CD14-positive monocyte (primary cell): ENCODE measurements at regions of chr19 and their contacts with region 1.

Region 1: GRCh38 chr19:7680606-7681339 is at the start of gene TRAPPC5:
- DNase-seq: peak; percentile 85 to 89 (median 89)
- H3K4me3 ChIP-seq: peak within 1 kb of the TSS; percentile 95 to 99 (median 96)
- H3K4me3 Mint-ChIP-seq: peak within 1 kb of the TSS; percentile 89 to 92
- H3K27ac ChIP-seq: peak within 1 kb of the TSS; percentile 96
- H3K27ac Mint-ChIP-seq: peak within 1 kb of the TSS; percentile 95 to 99 (median 98)
- H3K4me1 ChIP-seq: peaks cover 58 to 70% of the 10 kb centered on the region in 2 donors
- H3K4me1 Mint-ChIP-seq: peaks cover 61% of the 10 kb centered on the region
- H3K27me3 ChIP-seq: no peaks in the 10 kb centered on the region
- H3K27me3 Mint-ChIP-seq: peaks cover 0 to 2% (median 0%) of the 10 kb centered on the region in 3 donors
- CTCF ChIP-seq: peak; percentile 95
- polyA plus RNA-seq, gene TRAPPC5: 126 to 449 (median 414) TPM

Region 2: DNA sequence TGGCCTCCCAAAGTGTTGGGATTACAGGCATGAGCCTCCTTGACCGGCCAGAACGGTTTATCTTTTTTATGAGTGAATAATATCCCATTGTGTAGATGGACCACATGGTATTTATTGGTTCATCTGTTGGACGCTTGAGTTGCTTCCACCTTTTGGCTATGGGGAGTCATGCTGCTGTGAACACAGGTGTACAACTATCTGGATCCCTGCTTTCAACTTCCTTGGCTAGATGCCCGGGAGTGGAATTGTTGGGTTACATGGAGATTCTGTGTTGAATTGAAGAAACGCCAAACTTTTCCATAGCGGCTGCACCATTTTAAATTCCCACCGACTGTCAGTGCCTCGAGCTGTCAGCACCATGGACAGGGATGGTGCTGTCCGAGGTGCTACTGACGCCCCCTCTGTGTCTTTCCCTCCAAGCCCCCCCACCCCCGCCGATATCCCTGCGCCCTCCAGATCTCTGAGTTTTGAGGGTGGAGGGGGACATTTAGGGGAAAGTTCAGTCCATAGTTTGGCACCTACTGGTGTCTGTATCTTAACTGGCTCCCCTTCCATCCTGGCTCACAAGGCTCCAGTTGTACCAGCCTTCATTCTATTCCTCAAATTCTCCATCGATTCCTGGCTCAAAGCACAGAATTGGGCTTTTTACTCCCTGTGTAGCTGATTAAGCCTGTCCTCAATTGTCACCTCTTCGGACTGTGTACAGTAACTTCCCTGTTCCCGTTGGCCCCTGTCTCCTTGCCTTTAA is 118.0 kb before region 1 on chr19:
- intact Hi-C with region 1: loop called (anchors 2 kb)
- DNase-seq: no peak
- H3K4me3 ChIP-seq: no peak overlapping the region
- H3K4me3 Mint-ChIP-seq: no peak overlapping the region
- H3K27ac ChIP-seq: no peak overlapping the region
- H3K27ac Mint-ChIP-seq: no peak overlapping the region
- H3K4me1 ChIP-seq: peaks cover 0 to 5% of the 10 kb centered on the region in 2 donors
- H3K4me1 Mint-ChIP-seq: peaks cover 10% of the 10 kb centered on the region
- H3K27me3 ChIP-seq: no peaks in the 10 kb centered on the region
- H3K27me3 Mint-ChIP-seq: peaks cover 0 to 5% (median 2%) of the 10 kb centered on the region in 3 donors
- CTCF ChIP-seq: no peak

Region 3: GRCh38 chr19:7636691-7637373 is 43.9 kb before region 1 on chr19 and contains the start of gene STXBP2:
- intact Hi-C with region 1: loop called (anchors 5 kb)
- DNase-seq: peak; percentile 73 to 81 (median 74)
- H3K4me3 ChIP-seq: peak within 1 kb of the TSS; percentile 56 to 99 (median 90)
- H3K4me3 Mint-ChIP-seq: peak within 1 kb of the TSS; percentile 89 to 92
- H3K27ac ChIP-seq: peak within 1 kb of the TSS; percentile 96 to 100
- H3K27ac Mint-ChIP-seq: peak within 1 kb of the TSS; percentile 94 to 98 (median 95)
- H3K4me1 ChIP-seq: peaks cover 33 to 42% of the 10 kb centered on the region in 2 donors
- H3K4me1 Mint-ChIP-seq: peaks cover 46% of the 10 kb centered on the region
- H3K27me3 ChIP-seq: no peaks in the 10 kb centered on the region
- H3K27me3 Mint-ChIP-seq: peaks cover 0 to 3% (median 2%) of the 10 kb centered on the region in 3 donors
- CTCF ChIP-seq: no peak
- polyA plus RNA-seq, gene STXBP2: 249 to 846 (median 327) TPM

Region 4: GRCh38 chr19:7645163-7645562 is 35.6 kb before region 1 on chr19:
- intact Hi-C with region 1: loop called in 1 of 2 experiments (anchors 5 kb)
- DNase-seq: peak; percentile 63 to 77 (median 69)
- H3K4me3 ChIP-seq: peak overlapping the region in 2 of 3 experiments; percentile 51 to 75
- H3K4me3 Mint-ChIP-seq: peak overlapping the region; percentile 71 to 94
- H3K27ac ChIP-seq: peak overlapping the region; percentile 73 to 87
- H3K27ac Mint-ChIP-seq: peak overlapping the region; percentile 88 to 98 (median 93)
- H3K4me1 ChIP-seq: peaks cover 46 to 60% of the 10 kb centered on the region in 2 donors
- H3K4me1 Mint-ChIP-seq: peaks cover 41% of the 10 kb centered on the region
- H3K27me3 ChIP-seq: no peaks in the 10 kb centered on the region
- H3K27me3 Mint-ChIP-seq: no peaks in the 10 kb centered on the region
- CTCF ChIP-seq: no peak

Region 5: GRCh38 chr19:7658219-7658686 is 22.5 kb before region 1 on chr19:
- intact Hi-C with region 1: loop called (anchors 1 to 2 kb)
- DNase-seq: peak; percentile 72 to 87 (median 82)
- H3K4me3 ChIP-seq: peak overlapping the region in 2 of 3 experiments; percentile 16 to 61
- H3K4me3 Mint-ChIP-seq: peak overlapping the region; percentile 67 to 73
- H3K27ac ChIP-seq: peak overlapping the region; percentile 99 to 100
- H3K27ac Mint-ChIP-seq: peak overlapping the region; percentile 98 to 100 (median 99)
- H3K4me1 ChIP-seq: peaks cover 69 to 74% of the 10 kb centered on the region in 2 donors
- H3K4me1 Mint-ChIP-seq: peaks cover 58% of the 10 kb centered on the region
- H3K27me3 ChIP-seq: no peaks in the 10 kb centered on the region
- H3K27me3 Mint-ChIP-seq: peaks cover 0 to 18% (median 0%) of the 10 kb centered on the region in 3 donors
- CTCF ChIP-seq: no peak

Region 6: DNA sequence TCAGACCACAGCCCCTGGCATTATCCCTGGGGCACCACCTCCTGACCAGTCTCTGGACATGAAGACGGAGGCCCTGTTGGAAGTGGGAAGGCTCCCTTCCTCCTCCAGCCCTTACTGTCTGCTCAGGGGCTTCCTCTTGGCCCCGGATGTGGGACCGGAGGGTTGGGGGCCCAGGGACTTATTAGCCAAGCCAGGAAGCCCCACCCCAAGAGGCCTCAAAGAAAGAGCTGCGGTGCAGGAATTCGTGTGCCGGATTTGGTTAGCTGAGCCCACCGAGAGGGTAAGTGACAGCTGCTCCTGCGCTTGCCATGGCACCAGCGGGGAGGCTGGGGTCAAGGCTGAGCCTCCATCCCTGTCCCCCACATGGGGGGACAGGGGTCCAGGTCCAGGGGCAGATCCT is 11.9 kb before region 1 on chr19 and contains the start of gene RETN:
- intact Hi-C with region 1: no loop called
- DNase-seq: no peak
- H3K4me3 ChIP-seq: peak within 1 kb of the TSS; percentile 1 to 71 (median 37)
- H3K4me3 Mint-ChIP-seq: peak within 1 kb of the TSS; percentile 72 to 92
- H3K27ac ChIP-seq: peak within 1 kb of the TSS; percentile 70 to 87
- H3K27ac Mint-ChIP-seq: peak within 1 kb of the TSS; percentile 59 to 93 (median 82)
- H3K4me1 ChIP-seq: peaks cover 30 to 51% of the 10 kb centered on the region in 2 donors
- H3K4me1 Mint-ChIP-seq: peaks cover 47% of the 10 kb centered on the region
- H3K27me3 ChIP-seq: no peaks in the 10 kb centered on the region
- H3K27me3 Mint-ChIP-seq: peaks cover 0 to 3% (median 0%) of the 10 kb centered on the region in 3 donors
- CTCF ChIP-seq: no peak
- polyA plus RNA-seq, gene RETN: 42.1 to 119 (median 60.0) TPM

Region 7: GRCh38 chr19:7799640-7800355 is 119.0 kb after region 1 on chr19:
- intact Hi-C with region 1: loop called (anchors 2 to 5 kb)
- DNase-seq: peak; percentile 72 to 84 (median 77)
- H3K4me3 ChIP-seq: peak overlapping the region; percentile 31 to 70 (median 35)
- H3K4me3 Mint-ChIP-seq: peak overlapping the region; percentile 75 to 86
- H3K27ac ChIP-seq: peak overlapping the region; percentile 67 to 75
- H3K27ac Mint-ChIP-seq: peak overlapping the region; percentile 82 to 93 (median 91)
- H3K4me1 ChIP-seq: peaks cover 14 to 18% of the 10 kb centered on the region in 2 donors
- H3K4me1 Mint-ChIP-seq: peaks cover 12% of the 10 kb centered on the region
- H3K27me3 ChIP-seq: no peaks in the 10 kb centered on the region
- H3K27me3 Mint-ChIP-seq: peaks cover 0 to 8% (median 4%) of the 10 kb centered on the region in 3 donors
- CTCF ChIP-seq: peak; percentile 86

Region 8: GRCh38 chr19:7852851-7853769 is 172.3 kb after region 1 on chr19:
- intact Hi-C with region 1: no loop called
- DNase-seq: peak; percentile 29 to 53 (median 41)
- H3K4me3 ChIP-seq: no peak overlapping the region
- H3K4me3 Mint-ChIP-seq: no peak overlapping the region
- H3K27ac ChIP-seq: no peak overlapping the region
- H3K27ac Mint-ChIP-seq: peak overlapping the region in 2 of 7 donors; percentile 30 to 46
- H3K4me1 ChIP-seq: peaks cover 4 to 8% of the 10 kb centered on the region in 2 donors
- H3K4me1 Mint-ChIP-seq: peaks cover 4% of the 10 kb centered on the region
- H3K27me3 ChIP-seq: no peaks in the 10 kb centered on the region
- H3K27me3 Mint-ChIP-seq: peaks cover 0 to 8% (median 4%) of the 10 kb centered on the region in 3 donors
- CTCF ChIP-seq: peak; percentile 98